Left ventricle myocardium inferior (tissue), 1 donor: ENCODE measurements at regions of chr9 and their contacts with region 1.

Region 1: DNA sequence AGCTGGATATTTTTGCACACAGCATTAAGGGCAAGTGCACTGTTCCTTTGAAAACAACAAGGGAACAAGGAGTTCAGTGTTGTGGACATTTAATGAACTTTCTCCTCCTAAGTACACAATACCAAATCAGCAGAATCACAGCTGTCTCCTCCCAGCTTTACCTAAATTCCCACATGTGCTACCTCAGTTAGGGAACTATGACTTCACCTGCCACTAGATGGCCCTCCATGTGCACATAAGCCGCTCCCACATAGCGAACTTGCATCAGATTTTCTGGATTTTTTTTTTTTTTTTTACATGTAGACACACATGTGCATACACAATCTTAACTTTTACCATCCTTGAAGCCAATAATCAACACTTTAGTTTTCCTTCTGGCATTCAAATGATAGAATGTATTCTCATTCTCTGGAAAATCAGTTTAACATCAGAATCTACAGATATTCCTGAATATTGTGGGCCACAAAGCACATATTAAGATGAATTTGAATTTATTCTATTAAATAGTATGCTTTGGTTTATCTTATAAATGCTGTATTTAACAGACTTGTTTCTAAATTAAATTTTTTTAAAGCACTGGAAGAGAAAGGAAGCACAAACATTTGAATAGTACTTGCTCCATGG is 123.6 kb downstream of the PALM2AKAP2 start:
- DNase-seq: peak; percentile 29
- H3K4me3 ChIP-seq: no peak overlapping the region
- H3K27ac ChIP-seq: peak overlapping the region; percentile 59
- H3K4me1 ChIP-seq: peaks cover 76% of the 10 kb centered on the region
- H3K27me3 ChIP-seq: no peaks in the 10 kb centered on the region
- CTCF ChIP-seq: peak; percentile 86

Region 2: GRCh38 chr9:110058304-110058953 is 154.8 kb after region 1 on chr9:
- intact Hi-C with region 1: loop called (anchors 10 kb)
- DNase-seq: no peak
- H3K4me3 ChIP-seq: no peak overlapping the region
- H3K27ac ChIP-seq: peak overlapping the region; percentile 47
- H3K4me1 ChIP-seq: peaks cover 74% of the 10 kb centered on the region
- H3K27me3 ChIP-seq: no peaks in the 10 kb centered on the region
- CTCF ChIP-seq: peak; percentile 61

Region 3: DNA sequence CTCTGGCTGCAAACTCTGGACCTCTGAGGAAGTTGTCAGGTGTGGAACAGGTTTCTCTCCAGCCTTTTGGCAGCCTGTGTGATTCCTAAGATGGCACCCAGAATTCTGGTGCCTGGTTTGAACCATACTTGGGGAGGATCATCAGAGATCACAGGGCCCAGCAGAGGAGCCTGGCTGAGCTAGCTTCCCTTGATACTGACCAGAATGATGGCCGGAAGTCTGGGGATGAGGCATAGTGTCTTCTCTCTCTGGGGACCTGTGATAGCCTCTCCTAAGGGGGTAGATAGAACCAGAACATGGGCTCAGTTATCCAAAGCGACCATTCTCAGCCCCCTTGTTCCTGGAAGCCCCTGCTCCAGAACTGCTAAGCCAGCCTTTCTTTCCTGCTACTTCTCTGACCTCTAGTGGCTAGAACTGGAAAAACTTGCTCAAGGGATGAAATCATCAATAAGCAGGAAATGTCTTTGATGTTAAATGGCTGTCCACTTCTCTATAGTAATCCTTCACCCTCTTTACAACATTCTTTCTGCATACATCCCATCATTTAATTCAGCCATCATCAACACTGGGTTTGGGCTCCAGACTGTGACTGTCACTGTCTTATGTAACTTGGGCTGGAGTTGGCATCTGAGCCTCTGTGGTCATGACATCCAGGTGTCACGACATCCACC is 249.2 kb after region 1 on chr9:
- intact Hi-C with region 1: loop called (anchors 5 kb)
- DNase-seq: no peak
- H3K4me3 ChIP-seq: no peak overlapping the region
- H3K27ac ChIP-seq: peak overlapping the region; percentile 71
- H3K4me1 ChIP-seq: peaks cover 100% of the 10 kb centered on the region
- H3K27me3 ChIP-seq: no peaks in the 10 kb centered on the region
- CTCF ChIP-seq: peak; percentile 78